GM12878 (cell line): ENCODE measurements at regions of chr10 and their contacts with region 1.

Region 1: GRCh38 chr10:63629363-63630084 is 108.3 kb downstream of the REEP3 start:
- DNase-seq: peak; percentile 83
- ATAC-seq: peak; percentile 79
- H3K4me3 ChIP-seq: peak overlapping the region; percentile 87
- H3K27ac ChIP-seq: peak overlapping the region; percentile 89
- H3K4me1 ChIP-seq: peaks cover 9% of the 10 kb centered on the region; the same call in 1 of the 2 replicates
- H3K27me3 ChIP-seq: no peaks in the 10 kb centered on the region
- CTCF ChIP-seq: peak; percentile 84 to 94 (median 92)
- EP300 ChIP-seq: 0 out of 4 replicates have a peak, but pooled peaks of 1 of the 2 experiments have one; percentile 25
- POLR2A ChIP-seq: no peak
- RAD21 ChIP-seq: peak; percentile 87

Region 2: GRCh38 chr10:63173468-63174232 is 455.9 kb before region 1 on chr10:
- CTCF ChIA-PET with region 1: interaction called, 188 read pairs
- POLR2A ChIA-PET with region 1: no interaction called
- RAD21 ChIA-PET with region 1: interaction called, 89 read pairs
- SMC1A ChIA-PET with region 1: interaction called, 107 read pairs
- in situ Hi-C with region 1: no loop called
- intact Hi-C with region 1: loop called (anchors 2 kb)
- DNase-seq: peak; percentile 77
- ATAC-seq: peak; percentile 99
- H3K4me3 ChIP-seq: no peak overlapping the region
- H3K27ac ChIP-seq: peak overlapping the region; percentile 55
- H3K4me1 ChIP-seq: peaks cover 18% of the 10 kb centered on the region
- H3K27me3 ChIP-seq: no peaks in the 10 kb centered on the region
- CTCF ChIP-seq: no peak
- EP300 ChIP-seq: peak; percentile 32 to 86; a peak in 2 of 4 replicates
- POLR2A ChIP-seq: no peak
- RAD21 ChIP-seq: no peak

Region 3: GRCh38 chr10:63217120-63217605 is 412.4 kb before region 1 on chr10:
- CTCF ChIA-PET with region 1: interaction called, 90 read pairs
- POLR2A ChIA-PET with region 1: interaction called, 3 read pairs
- RAD21 ChIA-PET with region 1: interaction called, 43 read pairs
- SMC1A ChIA-PET with region 1: interaction called, 63 read pairs
- in situ Hi-C with region 1: no loop called
- intact Hi-C with region 1: loop called (anchors 1 kb)
- DNase-seq: no peak
- ATAC-seq: peak; percentile 86
- H3K4me3 ChIP-seq: no peak overlapping the region
- H3K27ac ChIP-seq: peak overlapping the region; percentile 39; the same call in 1 of the 2 replicates
- H3K4me1 ChIP-seq: peaks cover 5% of the 10 kb centered on the region; the same call in 1 of the 2 replicates
- H3K27me3 ChIP-seq: no peaks in the 10 kb centered on the region
- CTCF ChIP-seq: peak; percentile 43 to 67 (median 47); a peak in 5 of 6 replicates
- EP300 ChIP-seq: no peak
- POLR2A ChIP-seq: no peak
- RAD21 ChIP-seq: peak; percentile 76

Region 4: GRCh38 chr10:63268798-63269503 is 360.6 kb before region 1 on chr10:
- CTCF ChIA-PET with region 1: interaction called, 17 read pairs
- POLR2A ChIA-PET with region 1: interaction called, 8 read pairs
- RAD21 ChIA-PET with region 1: interaction called, 24 read pairs
- SMC1A ChIA-PET with region 1: interaction called, 31 read pairs
- in situ Hi-C with region 1: no loop called
- intact Hi-C with region 1: no loop called
- DNase-seq: peak; percentile 95
- ATAC-seq: peak; percentile 87
- H3K4me3 ChIP-seq: peak overlapping the region; percentile 91
- H3K27ac ChIP-seq: peak overlapping the region; percentile 80
- H3K4me1 ChIP-seq: peaks cover 18% of the 10 kb centered on the region
- H3K27me3 ChIP-seq: no peaks in the 10 kb centered on the region
- CTCF ChIP-seq: peak in 1 of 3 experiments; percentile 30; a peak in 1 of 6 replicates
- EP300 ChIP-seq: peak; percentile 83 to 84; a peak in 3 of 4 replicates
- POLR2A ChIP-seq: peak; percentile 99
- RAD21 ChIP-seq: no peak

Region 5: GRCh38 chr10:63376560-63377304 is 252.8 kb before region 1 on chr10:
- CTCF ChIA-PET with region 1: no interaction called
- POLR2A ChIA-PET with region 1: no interaction called
- RAD21 ChIA-PET with region 1: no interaction called
- SMC1A ChIA-PET with region 1: interaction called, 3 read pairs
- in situ Hi-C with region 1: no loop called
- intact Hi-C with region 1: loop called (anchors 1 kb)
- DNase-seq: peak; percentile 64
- ATAC-seq: peak; percentile 98
- H3K4me3 ChIP-seq: peak overlapping the region; percentile 8
- H3K27ac ChIP-seq: peak overlapping the region; percentile 47
- H3K4me1 ChIP-seq: peaks cover 7% of the 10 kb centered on the region
- H3K27me3 ChIP-seq: no peaks in the 10 kb centered on the region
- CTCF ChIP-seq: no peak
- EP300 ChIP-seq: 0 out of 4 replicates have a peak, but pooled peaks of 1 of the 2 experiments have one; percentile 30
- POLR2A ChIP-seq: no peak
- RAD21 ChIP-seq: no peak

Region 6: DNA sequence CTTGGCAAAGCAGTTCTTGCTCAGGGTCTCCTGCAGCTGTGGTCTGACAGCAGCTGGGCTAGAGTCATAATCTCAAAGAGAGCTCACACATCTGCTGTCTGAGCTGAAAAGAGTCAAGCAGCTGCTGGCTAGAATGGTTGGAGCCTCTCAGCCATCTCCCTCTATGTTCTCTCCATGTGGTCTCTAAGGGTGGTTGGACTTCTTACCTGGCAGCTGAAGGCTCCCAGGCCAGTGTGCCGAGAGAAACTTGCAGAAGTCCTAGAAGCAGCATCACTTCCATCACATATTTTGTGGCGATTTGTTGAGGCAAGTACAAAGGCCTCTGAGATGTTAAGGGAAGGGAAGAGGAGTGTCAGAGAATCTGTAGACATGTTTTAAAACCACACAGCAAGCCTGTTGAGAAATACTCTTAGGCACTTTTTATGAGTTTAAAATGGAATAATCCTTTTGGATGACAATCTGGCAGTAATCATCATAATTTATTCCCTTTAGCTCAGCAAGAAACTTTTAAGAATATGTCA is 15.1 kb before region 1 on chr10:
- CTCF ChIA-PET with region 1: interaction called, 7 read pairs
- POLR2A ChIA-PET with region 1: no interaction called
- RAD21 ChIA-PET with region 1: interaction called, 4 read pairs
- SMC1A ChIA-PET with region 1: interaction called, 17 read pairs
- in situ Hi-C with region 1: no loop called
- intact Hi-C with region 1: no loop called
- DNase-seq: no peak
- ATAC-seq: no peak; the same call in 2 of the 3 replicates
- H3K4me3 ChIP-seq: no peak overlapping the region
- H3K27ac ChIP-seq: no peak overlapping the region
- H3K4me1 ChIP-seq: no peaks in the 10 kb centered on the region
- H3K27me3 ChIP-seq: no peaks in the 10 kb centered on the region
- CTCF ChIP-seq: no peak
- EP300 ChIP-seq: no peak
- POLR2A ChIP-seq: no peak
- RAD21 ChIP-seq: no peak

Region 7: DNA sequence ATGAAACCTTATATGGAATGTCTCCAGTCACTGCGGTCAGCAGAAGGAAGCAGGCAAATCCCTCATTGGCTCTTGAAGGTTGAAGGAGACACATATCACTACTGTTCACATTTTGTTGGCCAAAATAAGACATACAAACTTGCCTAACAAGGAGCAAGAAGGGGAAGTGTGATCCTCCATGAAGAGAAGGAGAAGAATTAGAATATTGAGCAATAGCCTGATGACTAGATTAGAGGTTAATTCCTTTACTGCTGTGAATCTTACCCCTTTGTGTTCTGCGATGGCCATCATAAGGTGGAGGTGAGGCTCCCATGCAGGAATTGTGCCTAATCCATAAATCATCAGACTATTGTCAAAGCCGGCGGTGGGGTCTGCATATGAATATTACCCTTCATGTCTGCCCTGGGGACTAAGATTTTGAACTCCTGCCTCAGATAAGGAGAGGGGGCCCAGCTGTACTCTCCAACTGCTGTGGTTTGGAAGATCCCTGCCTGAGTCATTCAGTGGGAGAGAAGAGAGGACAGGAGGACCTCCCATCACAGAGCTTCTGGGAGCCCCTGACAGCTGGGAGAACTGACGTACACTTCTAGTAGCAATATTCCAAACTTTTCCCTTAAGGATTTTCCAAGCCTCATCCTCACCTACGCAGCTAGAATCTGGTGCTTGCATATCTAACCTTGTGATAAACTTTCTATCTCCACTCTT is 290.2 kb after region 1 on chr10:
- CTCF ChIA-PET with region 1: no interaction called
- POLR2A ChIA-PET with region 1: no interaction called
- RAD21 ChIA-PET with region 1: no interaction called
- SMC1A ChIA-PET with region 1: no interaction called
- in situ Hi-C with region 1: no loop called
- intact Hi-C with region 1: no loop called
- DNase-seq: no peak
- ATAC-seq: no peak
- H3K4me3 ChIP-seq: no peak overlapping the region
- H3K27ac ChIP-seq: no peak overlapping the region
- H3K4me1 ChIP-seq: no peaks in the 10 kb centered on the region
- H3K27me3 ChIP-seq: no peaks in the 10 kb centered on the region
- CTCF ChIP-seq: no peak
- EP300 ChIP-seq: no peak
- POLR2A ChIP-seq: no peak
- RAD21 ChIP-seq: no peak